Mammary epithelial cell (primary cell): ENCODE measurements at regions of chr7 and their contacts with region 1.

Region 1: GRCh38 chr7:4681886-4682620 is at the start of gene FOXK1:
- DNase-seq: peak; percentile 56
- H3K4me3 ChIP-seq: peak within 1 kb of the TSS; percentile 87 to 94 (median 92)
- H3K27ac ChIP-seq: peak within 1 kb of the TSS; percentile 94
- H3K4me1 ChIP-seq: peaks cover 26% of the 10 kb centered on the region
- H3K27me3 ChIP-seq: no peaks in the 10 kb centered on the region
- CTCF ChIP-seq: no peak
- total RNA-seq, gene FOXK1: 32.7 to 48.2 TPM

Region 2: DNA sequence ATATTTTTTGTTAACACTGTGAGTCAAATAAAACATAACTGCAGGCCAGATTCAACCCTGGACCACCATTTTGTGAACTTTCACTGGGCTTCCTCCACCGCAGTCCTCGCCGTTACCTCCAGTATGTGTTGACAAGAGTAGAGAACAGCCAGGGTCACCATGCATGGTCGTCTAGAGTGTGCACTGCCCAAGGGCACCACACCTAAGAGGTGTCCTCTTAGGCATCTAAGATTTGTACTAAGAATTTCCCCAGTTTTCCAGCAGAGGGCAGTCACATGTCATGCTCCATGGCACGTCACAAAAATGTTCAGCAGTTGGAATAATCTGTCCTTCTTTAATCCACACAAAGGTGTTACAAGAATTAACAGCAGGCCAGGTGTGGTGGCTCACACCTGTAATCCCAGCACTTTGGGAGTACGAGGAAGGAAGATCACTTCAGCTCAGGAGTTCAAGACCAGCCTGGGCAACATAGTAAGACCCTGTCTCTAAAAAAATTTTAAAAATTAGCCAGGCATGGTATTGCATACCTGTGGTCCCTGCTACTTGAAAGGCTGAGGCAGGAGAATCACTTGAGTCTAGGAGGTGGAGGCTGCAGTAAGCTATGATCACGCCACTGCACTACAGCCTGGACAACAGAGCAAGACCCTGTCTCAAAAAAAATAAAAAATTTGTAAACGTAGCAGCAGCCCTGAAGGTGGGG is 71.1 kb before region 1 on chr7:
- CTCF ChIA-PET with region 1: no interaction called
- dilution Hi-C with region 1: no loop called
- in situ Hi-C with region 1: no loop called
- intact Hi-C with region 1: loop called (anchors 2 kb)
- DNase-seq: peak; percentile 60
- H3K4me3 ChIP-seq: no peak overlapping the region
- H3K27ac ChIP-seq: no peak overlapping the region
- H3K4me1 ChIP-seq: no peaks in the 10 kb centered on the region
- H3K27me3 ChIP-seq: no peaks in the 10 kb centered on the region
- CTCF ChIP-seq: peak; percentile 76 to 79

Region 3: DNA sequence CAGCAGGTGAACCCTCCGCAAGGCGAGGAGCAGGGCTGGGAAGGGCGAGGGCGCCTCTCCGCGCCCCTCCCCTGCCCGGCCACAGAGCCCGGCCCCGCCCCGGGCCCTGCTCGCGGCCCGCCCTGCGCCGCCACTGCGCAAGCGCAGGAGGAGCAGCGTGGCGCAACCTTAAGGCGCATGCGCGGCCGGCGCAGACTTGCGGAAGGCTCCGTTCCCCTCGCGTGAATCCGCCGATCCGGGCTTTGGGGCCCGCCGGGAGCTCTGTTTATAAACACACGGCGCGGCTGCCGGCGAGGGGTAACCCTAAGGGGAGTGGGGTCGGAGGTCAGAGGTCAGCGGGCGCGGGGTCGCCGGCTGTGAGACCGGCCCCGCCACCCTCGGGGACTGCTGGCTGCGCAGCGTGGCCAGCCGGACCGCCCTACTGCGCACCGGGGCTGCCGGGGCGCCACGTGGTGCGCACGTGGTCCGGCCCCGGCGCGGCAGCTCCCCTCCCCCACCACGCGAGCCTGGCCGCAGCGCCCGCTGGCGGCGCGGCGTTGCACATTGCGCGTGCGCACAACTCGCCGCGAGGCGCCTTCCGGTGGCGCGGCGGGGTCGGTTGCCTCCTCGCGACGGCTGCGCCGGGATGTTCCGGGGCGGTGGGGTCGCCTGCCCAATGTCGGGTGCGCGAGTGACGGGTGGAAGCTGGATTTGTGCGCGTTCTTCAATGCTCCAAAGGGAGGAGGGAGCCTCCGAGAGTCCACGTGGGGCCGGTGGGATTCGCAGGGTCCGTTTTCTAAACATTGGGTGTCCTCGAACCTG is 40.2 kb before region 1 on chr7:
- CTCF ChIA-PET with region 1: no interaction called
- dilution Hi-C with region 1: loop called (anchors 5 kb)
- in situ Hi-C with region 1: loop called in 1 of 2 experiments (anchors 5 kb)
- intact Hi-C with region 1: loop called (anchors 1 kb)
- DNase-seq: peak; percentile 83
- H3K4me3 ChIP-seq: peak overlapping the region; percentile 77 to 93 (median 81)
- H3K27ac ChIP-seq: peak overlapping the region; percentile 48
- H3K4me1 ChIP-seq: peaks cover 6% of the 10 kb centered on the region
- H3K27me3 ChIP-seq: no peaks in the 10 kb centered on the region
- CTCF ChIP-seq: peak; percentile 27 to 49

Region 4: GRCh38 chr7:4725014-4725849 is 43.2 kb after region 1 on chr7:
- CTCF ChIA-PET with region 1: no interaction called
- dilution Hi-C with region 1: no loop called
- in situ Hi-C with region 1: no loop called
- intact Hi-C with region 1: loop called (anchors 2 kb)
- DNase-seq: peak; percentile 81
- H3K4me3 ChIP-seq: peak overlapping the region; percentile 41 to 48 (median 47)
- H3K27ac ChIP-seq: peak overlapping the region; percentile 82
- H3K4me1 ChIP-seq: peaks cover 16% of the 10 kb centered on the region
- H3K27me3 ChIP-seq: no peaks in the 10 kb centered on the region
- CTCF ChIP-seq: no peak

Region 5: DNA sequence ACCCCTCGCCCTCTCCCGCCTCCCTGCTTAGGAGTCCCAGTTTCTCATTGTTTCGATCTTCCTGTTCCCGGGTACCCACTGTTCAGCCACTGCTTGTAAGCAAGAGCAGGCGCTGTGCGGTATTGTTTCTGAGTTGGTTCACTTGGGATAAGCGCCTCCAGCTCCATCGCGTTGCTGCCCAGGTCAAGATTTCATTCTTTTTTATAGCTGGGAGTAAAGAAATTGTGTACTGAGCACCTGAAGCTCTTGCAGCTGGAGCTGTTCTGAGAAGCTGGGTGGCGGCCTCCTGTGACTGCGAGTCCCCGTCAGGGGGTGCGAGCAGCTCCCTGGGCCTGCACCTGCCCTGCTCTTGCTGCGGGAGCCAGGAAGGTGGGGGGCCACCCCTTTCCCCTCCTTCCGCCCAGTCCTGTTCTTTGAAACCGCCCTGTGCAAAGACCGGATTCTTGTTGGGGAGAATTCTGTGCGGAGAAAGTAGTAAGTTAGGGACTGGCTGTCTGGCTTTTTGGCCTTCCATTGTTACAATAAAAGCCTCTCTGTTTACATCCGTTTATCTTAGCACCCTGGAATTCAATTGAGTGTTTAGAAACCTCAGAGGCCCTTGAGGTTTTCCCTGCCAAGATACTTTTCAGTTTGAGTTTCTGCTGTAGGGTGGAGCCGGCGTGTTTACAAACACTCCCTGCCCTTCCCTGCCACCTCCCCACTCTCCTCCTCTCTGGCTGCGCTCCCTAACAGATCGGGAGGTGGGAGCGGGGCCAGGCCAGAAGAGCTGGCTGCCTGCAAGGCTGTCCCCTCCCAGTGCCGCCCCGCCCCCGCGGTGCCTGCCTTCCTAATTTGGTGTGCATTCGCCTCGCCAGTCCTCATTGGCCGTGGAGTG is 62.6 kb after region 1 on chr7:
- CTCF ChIA-PET with region 1: no interaction called
- dilution Hi-C with region 1: loop called (anchors 5 kb)
- in situ Hi-C with region 1: loop called in 1 of 2 experiments (anchors 10 kb)
- intact Hi-C with region 1: loop called (anchors 1 kb)
- DNase-seq: peak; percentile 99
- H3K4me3 ChIP-seq: peak overlapping the region in 2 of 3 experiments; percentile 16
- H3K27ac ChIP-seq: peak overlapping the region; percentile 91
- H3K4me1 ChIP-seq: peaks cover 25% of the 10 kb centered on the region
- H3K27me3 ChIP-seq: no peaks in the 10 kb centered on the region
- CTCF ChIP-seq: peak in 1 of 2 donors; percentile 1

Region 6: DNA sequence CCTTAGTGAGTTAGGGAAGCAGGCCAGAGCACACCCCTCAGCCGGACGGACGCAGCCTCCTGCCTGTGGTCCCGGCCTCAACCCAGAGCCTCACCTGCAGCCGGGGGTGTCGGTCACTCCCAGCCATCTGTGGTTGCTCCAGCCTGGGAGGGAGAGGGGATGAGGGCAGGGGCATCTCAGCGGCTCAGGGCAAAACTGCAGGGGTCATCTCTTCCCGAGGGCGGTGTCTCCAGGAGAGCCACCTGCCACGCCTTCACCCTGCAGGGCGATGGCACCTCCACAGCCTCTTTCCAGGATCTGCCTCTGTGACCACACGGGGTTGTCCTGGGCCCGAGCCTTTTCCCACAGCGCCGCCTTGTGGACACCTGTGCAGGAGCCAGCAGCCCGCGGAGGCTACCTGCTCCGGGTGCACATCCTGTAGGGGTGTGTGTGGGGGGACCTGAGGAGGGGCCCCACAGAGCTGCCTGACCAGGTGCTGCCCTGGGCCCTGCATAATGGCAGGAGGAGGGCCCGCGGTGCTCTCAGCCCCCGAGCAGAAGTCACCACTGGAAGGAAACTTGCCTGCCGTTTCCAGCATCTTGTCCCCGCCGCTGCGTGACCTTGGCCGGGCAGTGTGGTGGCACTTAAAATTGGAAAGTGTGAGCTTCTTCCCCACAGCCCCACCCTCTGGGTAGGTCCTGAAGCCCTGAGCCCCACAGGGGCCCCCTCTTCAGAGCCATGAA is 71.8 kb after region 1 on chr7:
- CTCF ChIA-PET with region 1: no interaction called
- dilution Hi-C with region 1: loop called (anchors 5 kb)
- in situ Hi-C with region 1: loop called in 1 of 2 experiments (anchors 10 kb)
- intact Hi-C with region 1: loop called (anchors 1 kb)
- DNase-seq: peak; percentile 59
- H3K4me3 ChIP-seq: no peak overlapping the region
- H3K27ac ChIP-seq: no peak overlapping the region
- H3K4me1 ChIP-seq: no peaks in the 10 kb centered on the region
- H3K27me3 ChIP-seq: no peaks in the 10 kb centered on the region
- CTCF ChIP-seq: peak; percentile 84 to 95

Region 7: DNA sequence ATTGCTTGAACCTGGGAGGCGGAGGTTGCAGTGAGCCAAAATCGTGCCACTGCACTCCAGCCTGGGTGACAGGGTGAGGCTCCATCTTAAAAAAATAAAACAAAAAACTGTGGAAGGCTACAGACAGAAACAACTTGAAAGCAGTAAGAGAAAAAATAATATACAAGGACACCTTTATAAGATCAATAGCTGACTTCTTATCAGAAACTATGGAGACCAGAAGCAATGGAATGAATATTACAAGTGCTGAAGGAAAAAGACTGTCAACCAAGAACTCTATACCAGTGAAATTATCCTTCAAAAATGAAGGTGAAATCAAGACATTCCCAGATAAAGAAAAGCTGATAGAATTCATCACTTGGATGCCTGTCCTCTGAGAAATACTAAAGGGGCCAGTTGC is 412.6 kb after region 1 on chr7:
- CTCF ChIA-PET with region 1: interaction called, 31 read pairs
- dilution Hi-C with region 1: no loop called
- in situ Hi-C with region 1: no loop called
- intact Hi-C with region 1: no loop called
- DNase-seq: no peak
- H3K4me3 ChIP-seq: no peak overlapping the region
- H3K27ac ChIP-seq: no peak overlapping the region
- H3K4me1 ChIP-seq: no peaks in the 10 kb centered on the region
- H3K27me3 ChIP-seq: no peaks in the 10 kb centered on the region
- CTCF ChIP-seq: no peak